ENCODE measurements at regions of chr5 and their contacts with region 1.

Region 1: GRCh38 chr5:126837906-126838539 is 61.1 kb downstream of the LMNB1 start:
- DNase-seq: no peak
- ATAC-seq: peak; percentile 43
- H3K4me3 ChIP-seq: no peak overlapping the region
- H3K27ac ChIP-seq: no peak overlapping the region
- H3K4me1 ChIP-seq: no peaks in the 10 kb centered on the region
- H3K27me3 ChIP-seq: no peaks in the 10 kb centered on the region
- CTCF ChIP-seq: peak; percentile 22 to 26

Region 2: GRCh38 chr5:126801992-126802294 is 36.1 kb before region 1 on chr5:
- intact Hi-C with region 1: no loop called
- DNase-seq: peak in 1 of 4 donors; percentile 44
- ATAC-seq: peak; percentile 61
- H3K4me3 ChIP-seq: no peak overlapping the region
- H3K27ac ChIP-seq: no peak overlapping the region
- H3K4me1 ChIP-seq: peaks cover 0 to 11% of the 10 kb centered on the region in 2 donors
- H3K27me3 ChIP-seq: no peaks in the 10 kb centered on the region
- CTCF ChIP-seq: no peak

Region 3: GRCh38 chr5:127299678-127300077 is 461.7 kb after region 1 on chr5:
- intact Hi-C with region 1: loop called in 1 of 2 experiments (anchors 10 kb)
- DNase-seq: no peak
- ATAC-seq: no peak
- H3K4me3 ChIP-seq: no peak overlapping the region
- H3K27ac ChIP-seq: no peak overlapping the region
- H3K4me1 ChIP-seq: no peaks in the 10 kb centered on the region
- H3K27me3 ChIP-seq: no peaks in the 10 kb centered on the region
- CTCF ChIP-seq: no peak

Measured in left lung (tissue), 14 donors.